CD8-positive, alpha-beta memory T cell (primary cell): ENCODE measurements at regions of chr9 and their contacts with region 1.

Region 1: DNA sequence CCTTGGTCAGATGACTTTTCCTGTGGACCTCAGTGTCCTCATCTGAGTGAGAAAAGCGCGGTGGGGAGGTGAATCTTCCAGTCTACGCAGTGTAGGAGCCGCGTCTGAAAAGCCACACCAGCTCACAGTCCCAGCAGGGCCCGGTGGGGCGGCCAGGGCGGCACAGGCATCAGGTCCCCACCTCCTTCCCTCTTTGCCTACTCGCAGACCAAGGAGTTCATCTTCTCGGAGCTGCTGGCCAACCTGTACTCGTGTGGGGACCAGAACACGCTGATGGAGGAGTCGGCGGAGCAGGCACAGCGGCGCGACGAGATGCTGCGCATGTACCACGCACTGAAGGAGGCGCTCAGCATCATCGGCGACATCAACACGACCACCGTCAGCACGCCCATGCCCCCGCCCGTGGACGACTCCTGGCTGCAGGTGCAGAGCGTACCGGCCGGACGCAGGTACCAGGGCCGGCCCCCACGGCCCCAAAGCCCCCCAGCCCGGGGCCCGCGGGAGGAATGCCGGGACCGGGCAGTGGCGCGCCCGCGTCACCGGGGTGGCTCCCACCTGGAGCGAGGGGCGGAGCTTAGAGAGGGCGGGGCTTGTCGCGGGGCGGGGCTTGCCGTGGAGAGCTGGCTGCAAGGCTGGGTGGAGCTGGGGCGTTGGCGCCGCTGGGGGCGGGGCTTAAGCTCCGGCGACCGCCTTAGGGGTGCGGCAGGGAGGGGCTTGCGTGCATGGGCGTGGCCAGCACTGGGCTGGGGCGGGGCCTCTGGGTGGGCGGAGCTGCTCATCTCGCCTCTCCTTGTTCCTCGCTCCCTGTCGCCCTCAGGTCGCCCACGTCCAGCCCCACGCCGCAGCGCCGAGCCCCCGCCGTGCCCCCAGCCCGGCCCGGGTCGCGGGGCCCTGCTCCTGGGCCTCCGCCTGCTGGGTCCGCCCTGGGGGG is 25.6 kb downstream of the GOLGA2 start:
- DNase-seq: peak; percentile 95 to 99 (median 98)
- H3K4me3 ChIP-seq: peak overlapping the region; percentile 71
- H3K4me3 Mint-ChIP-seq: peak overlapping the region; percentile 83 to 90 (median 87)
- H3K27ac ChIP-seq: peak overlapping the region; percentile 51
- H3K27ac Mint-ChIP-seq: peak overlapping the region; percentile 72 to 95 (median 88)
- H3K4me1 ChIP-seq: peaks cover 19% of the 10 kb centered on the region
- H3K4me1 Mint-ChIP-seq: peaks cover 17 to 23% (median 20%) of the 10 kb centered on the region in 3 donors
- H3K27me3 ChIP-seq: no peaks in the 10 kb centered on the region
- H3K27me3 Mint-ChIP-seq: peaks cover 3 to 5% of the 10 kb centered on the region in 2 donors

Region 2: DNA sequence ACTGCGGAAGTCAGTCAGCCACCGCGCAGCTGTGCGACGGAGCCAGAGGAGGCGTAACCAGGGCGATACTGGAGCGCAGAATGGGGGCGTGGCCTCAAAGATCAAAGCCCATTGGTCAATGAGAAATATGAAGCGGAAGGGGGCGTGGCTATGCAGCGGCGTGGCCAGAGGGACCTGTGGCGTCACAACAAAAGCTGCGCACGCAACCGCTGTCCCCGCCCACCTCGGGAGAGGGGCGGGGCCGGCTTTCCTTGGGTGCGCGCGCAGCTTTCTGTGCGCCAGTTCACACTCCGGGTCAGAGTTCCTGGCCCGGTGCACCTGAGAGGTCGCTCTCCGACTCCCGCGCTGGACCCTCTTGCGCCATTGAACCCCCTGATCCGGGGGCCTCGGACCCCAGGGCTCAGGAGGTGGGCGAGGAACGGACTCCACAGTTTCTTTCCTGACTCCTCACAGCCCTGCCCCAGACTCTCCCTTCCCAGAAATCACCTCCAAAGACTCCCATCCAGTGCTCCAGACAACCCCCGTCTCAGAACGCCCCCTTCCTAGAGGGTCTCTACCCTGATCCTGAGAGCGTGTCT is 25.9 kb after region 1 on chr9 and contains the starts of genes GOLGA2 and SWI5:
- CTCF ChIA-PET with region 1: interaction called, 7 read pairs
- POLR2A ChIA-PET with region 1: interaction called, 20 read pairs
- DNase-seq: peak; percentile 100
- H3K4me3 ChIP-seq: peak within 1 kb of the TSS; percentile 98
- H3K4me3 Mint-ChIP-seq: peak within 1 kb of the TSS; percentile 96 to 98 (median 97)
- H3K27ac ChIP-seq: peak within 1 kb of the TSS; percentile 96
- H3K27ac Mint-ChIP-seq: peak within 1 kb of the TSS; percentile 94 to 99 (median 97)
- H3K4me1 ChIP-seq: peaks cover 19% of the 10 kb centered on the region
- H3K4me1 Mint-ChIP-seq: peaks cover 28 to 47% (median 43%) of the 10 kb centered on the region in 3 donors
- H3K27me3 ChIP-seq: no peaks in the 10 kb centered on the region
- H3K27me3 Mint-ChIP-seq: peaks cover 0 to 3% of the 10 kb centered on the region in 2 donors
- total RNA-seq, gene GOLGA2: 35.4 to 35.5 TPM
- total RNA-seq, gene SWI5: 18.1 to 20.9 TPM

Region 3: DNA sequence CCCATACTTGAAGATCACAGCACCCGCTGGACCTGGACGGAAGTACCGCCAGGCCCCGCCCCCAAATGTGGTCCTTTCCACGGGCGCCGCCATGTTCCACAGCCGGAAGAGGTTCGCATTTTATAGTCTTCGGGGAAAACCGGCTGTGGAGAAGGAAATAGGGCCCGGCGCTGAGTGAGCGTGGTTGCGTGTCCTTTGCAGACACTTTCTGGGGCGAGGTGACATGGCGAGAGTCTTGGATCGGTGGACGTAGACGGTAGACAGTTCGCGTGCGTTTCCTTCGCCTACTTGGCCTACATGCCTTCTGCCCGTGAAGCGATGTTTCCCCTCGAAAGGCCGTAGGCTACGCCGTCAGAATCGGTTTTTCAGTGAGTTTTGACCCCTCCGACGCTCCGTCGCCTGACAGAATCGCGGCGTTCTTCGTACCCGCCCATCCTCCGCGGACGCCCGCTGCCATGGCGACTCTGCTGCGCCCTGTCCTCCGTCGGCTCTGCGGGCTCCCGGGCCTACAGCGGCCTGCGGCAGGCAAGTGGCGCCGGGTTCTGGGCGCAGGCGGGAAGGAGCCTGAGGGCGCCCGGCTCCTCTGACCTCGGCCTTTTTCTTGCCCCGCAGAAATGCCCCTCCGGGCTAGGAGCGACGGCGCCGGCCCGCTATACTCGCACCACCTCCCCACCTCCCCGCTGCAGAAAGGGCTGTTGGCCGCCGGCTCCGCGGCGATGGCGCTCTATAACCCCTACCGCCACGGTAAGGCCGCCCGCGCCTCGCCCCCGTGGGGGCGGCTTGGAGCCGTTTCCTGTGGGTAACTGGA is 72.4 kb after region 1 on chr9 and contains the starts of genes COQ4 and TRUB2:
- CTCF ChIA-PET with region 1: no interaction called
- POLR2A ChIA-PET with region 1: no interaction called
- DNase-seq: peak; percentile 89 to 95 (median 92)
- H3K4me3 ChIP-seq: peak within 1 kb of the TSS; percentile 81
- H3K4me3 Mint-ChIP-seq: peak within 1 kb of the TSS; percentile 91 to 99 (median 96)
- H3K27ac ChIP-seq: peak within 1 kb of the TSS; percentile 85
- H3K27ac Mint-ChIP-seq: peak within 1 kb of the TSS; percentile 95 to 100 (median 98)
- H3K4me1 ChIP-seq: peaks cover 29% of the 10 kb centered on the region
- H3K4me1 Mint-ChIP-seq: peaks cover 29 to 44% (median 34%) of the 10 kb centered on the region in 3 donors
- H3K27me3 ChIP-seq: no peaks in the 10 kb centered on the region
- H3K27me3 Mint-ChIP-seq: no peaks in the 10 kb centered on the region
- total RNA-seq, gene COQ4: 51.1 to 56.9 TPM
- total RNA-seq, gene TRUB2: 48.8 to 50.4 TPM